Activated CD4-positive, alpha-beta T cell treated with anti-CD3 and anti-CD28 coated beads for 36 hours (primary cell): ENCODE measurements at regions of chr4 and their contacts with region 1.

Region 1: GRCh38 chr4:83284193-83285054 is at the start of gene COQ2:
- DNase-seq: peak; percentile 97
- ATAC-seq: peak; percentile 92
- H3K4me3 Mint-ChIP-seq: peak within 1 kb of the TSS; percentile 91
- H3K27ac Mint-ChIP-seq: peak within 1 kb of the TSS; percentile 96
- H3K4me1 Mint-ChIP-seq: peaks cover 29% of the 10 kb centered on the region
- H3K27me3 Mint-ChIP-seq: no peaks in the 10 kb centered on the region
- total RNA-seq, gene COQ2: 18.2 to 20.1 TPM

Region 2: GRCh38 chr4:82428969-82429727 is 855.3 kb before region 1 on chr4:
- CTCF ChIA-PET with region 1: no interaction called
- POLR2A ChIA-PET with region 1: no interaction called
- intact Hi-C with region 1: loop called in 1 of 2 experiments (anchors 5 kb)
- DNase-seq: peak; percentile 96
- ATAC-seq: peak; percentile 55
- H3K4me3 Mint-ChIP-seq: peak overlapping the region; percentile 94
- H3K27ac Mint-ChIP-seq: peak overlapping the region; percentile 99
- H3K4me1 Mint-ChIP-seq: peaks cover 50% of the 10 kb centered on the region
- H3K27me3 Mint-ChIP-seq: no peaks in the 10 kb centered on the region

Region 3: GRCh38 chr4:82890901-82891706 is 393.3 kb before region 1 on chr4 and contains the start of gene SEC31A:
- CTCF ChIA-PET with region 1: no interaction called
- POLR2A ChIA-PET with region 1: no interaction called
- intact Hi-C with region 1: loop called in 1 of 2 experiments (anchors 1 kb)
- DNase-seq: peak; percentile 99
- ATAC-seq: peak; percentile 94
- H3K4me3 Mint-ChIP-seq: peak within 1 kb of the TSS; percentile 81
- H3K27ac Mint-ChIP-seq: peak within 1 kb of the TSS; percentile 89
- H3K4me1 Mint-ChIP-seq: peaks cover 42% of the 10 kb centered on the region
- H3K27me3 Mint-ChIP-seq: no peaks in the 10 kb centered on the region
- total RNA-seq, gene SEC31A: 80.3 to 124 TPM

Region 4: DNA sequence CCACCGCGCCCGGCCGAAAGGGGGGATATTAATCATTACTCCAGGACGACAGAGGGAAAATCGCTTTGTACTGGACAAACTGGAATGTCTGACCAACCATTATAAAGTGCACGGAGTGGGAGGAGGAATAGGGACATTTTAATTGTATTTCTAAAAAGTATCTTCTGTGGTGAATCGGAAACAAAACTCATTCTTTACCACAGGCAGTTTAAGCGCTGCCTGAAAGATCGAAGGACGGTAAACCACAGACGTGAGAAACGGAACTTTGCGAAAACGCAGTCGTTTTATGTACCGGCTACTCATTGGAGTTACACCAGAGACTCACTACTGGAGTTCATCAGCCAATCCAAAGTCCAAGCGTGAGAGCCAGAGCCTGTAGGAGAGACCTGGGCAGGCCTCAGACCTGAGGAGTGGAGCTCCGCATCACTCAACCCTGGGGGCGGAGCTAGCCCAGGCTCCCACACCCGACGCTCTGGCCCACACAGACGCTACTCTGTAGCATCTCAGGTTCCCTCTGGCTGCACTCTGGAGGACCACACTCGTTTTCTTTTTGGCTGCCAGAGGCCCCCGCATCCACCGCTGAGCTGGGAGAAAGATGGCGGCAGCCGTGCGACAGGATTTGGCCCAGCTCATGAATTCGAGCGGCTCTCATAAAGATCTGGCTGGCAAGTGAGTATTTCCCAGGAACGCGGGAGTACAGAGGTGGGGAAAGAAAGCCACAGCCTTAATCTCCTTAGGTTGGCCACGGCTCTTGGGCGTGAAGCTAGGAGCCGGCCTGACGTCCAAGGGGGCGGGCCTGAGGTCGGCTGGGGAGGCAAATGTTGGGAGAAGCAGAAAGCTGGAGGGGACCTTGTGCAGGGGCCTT is 249.6 kb before region 1 on chr4 and contains the start of gene COPS4:
- CTCF ChIA-PET with region 1: interaction called, 9 read pairs
- POLR2A ChIA-PET with region 1: interaction called, 7 read pairs
- intact Hi-C with region 1: loop called (anchors 1 kb)
- DNase-seq: peak; percentile 97
- ATAC-seq: peak; percentile 97
- H3K4me3 Mint-ChIP-seq: peak within 1 kb of the TSS; percentile 91
- H3K27ac Mint-ChIP-seq: peak within 1 kb of the TSS; percentile 94
- H3K4me1 Mint-ChIP-seq: peaks cover 22% of the 10 kb centered on the region
- H3K27me3 Mint-ChIP-seq: no peaks in the 10 kb centered on the region
- total RNA-seq, gene COPS4: 35.7 to 35.9 TPM

Region 5: GRCh38 chr4:83110223-83110945 is 174.0 kb before region 1 on chr4:
- CTCF ChIA-PET with region 1: interaction called, 9 read pairs
- POLR2A ChIA-PET with region 1: interaction called, 3 read pairs
- intact Hi-C with region 1: loop called (anchors 1 to 2 kb)
- DNase-seq: peak; percentile 96
- ATAC-seq: peak; percentile 81
- H3K4me3 Mint-ChIP-seq: peak overlapping the region; percentile 91
- H3K27ac Mint-ChIP-seq: peak overlapping the region; percentile 96
- H3K4me1 Mint-ChIP-seq: peaks cover 49% of the 10 kb centered on the region
- H3K27me3 Mint-ChIP-seq: no peaks in the 10 kb centered on the region

Region 6: DNA sequence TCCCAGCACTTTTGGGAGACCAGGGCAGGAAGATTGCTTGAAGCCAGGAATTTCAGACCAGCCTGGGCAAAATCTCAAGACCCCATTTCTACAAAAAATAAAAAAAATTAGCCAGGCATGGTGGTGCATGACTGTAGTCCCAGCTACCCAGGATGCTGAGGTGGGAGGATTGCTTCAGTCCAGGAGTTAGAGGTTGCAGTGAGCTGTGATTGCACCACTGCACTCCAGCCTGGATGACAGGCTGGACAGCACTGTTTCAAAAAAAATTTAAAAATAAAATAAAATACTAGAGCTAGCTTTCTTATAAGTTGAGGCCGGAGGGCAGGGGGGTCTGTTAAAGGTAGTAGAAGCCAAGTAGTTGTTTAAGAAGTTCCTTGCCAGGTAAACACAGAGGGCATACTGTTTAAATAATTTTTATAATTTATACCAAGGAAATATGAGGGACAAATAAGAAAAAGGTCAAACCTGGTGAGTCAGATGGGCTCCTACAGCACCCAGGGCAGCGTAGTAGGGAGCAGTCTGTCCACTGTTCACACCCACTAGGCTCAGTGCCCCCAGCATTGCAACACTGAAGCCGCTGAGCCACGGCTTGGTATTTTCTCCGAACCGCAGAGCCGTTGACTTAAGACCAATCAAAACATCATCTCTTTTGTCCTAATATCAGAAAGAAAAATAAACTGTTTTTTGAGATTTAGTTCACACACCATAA is 17.1 kb before region 1 on chr4:
- CTCF ChIA-PET with region 1: interaction called, 31 read pairs
- POLR2A ChIA-PET with region 1: interaction called, 3 read pairs
- intact Hi-C with region 1: no loop called
- DNase-seq: no peak
- ATAC-seq: no peak
- H3K4me3 Mint-ChIP-seq: no peak overlapping the region
- H3K27ac Mint-ChIP-seq: no peak overlapping the region
- H3K4me1 Mint-ChIP-seq: peaks cover 10% of the 10 kb centered on the region
- H3K27me3 Mint-ChIP-seq: no peaks in the 10 kb centered on the region

Region 7: DNA sequence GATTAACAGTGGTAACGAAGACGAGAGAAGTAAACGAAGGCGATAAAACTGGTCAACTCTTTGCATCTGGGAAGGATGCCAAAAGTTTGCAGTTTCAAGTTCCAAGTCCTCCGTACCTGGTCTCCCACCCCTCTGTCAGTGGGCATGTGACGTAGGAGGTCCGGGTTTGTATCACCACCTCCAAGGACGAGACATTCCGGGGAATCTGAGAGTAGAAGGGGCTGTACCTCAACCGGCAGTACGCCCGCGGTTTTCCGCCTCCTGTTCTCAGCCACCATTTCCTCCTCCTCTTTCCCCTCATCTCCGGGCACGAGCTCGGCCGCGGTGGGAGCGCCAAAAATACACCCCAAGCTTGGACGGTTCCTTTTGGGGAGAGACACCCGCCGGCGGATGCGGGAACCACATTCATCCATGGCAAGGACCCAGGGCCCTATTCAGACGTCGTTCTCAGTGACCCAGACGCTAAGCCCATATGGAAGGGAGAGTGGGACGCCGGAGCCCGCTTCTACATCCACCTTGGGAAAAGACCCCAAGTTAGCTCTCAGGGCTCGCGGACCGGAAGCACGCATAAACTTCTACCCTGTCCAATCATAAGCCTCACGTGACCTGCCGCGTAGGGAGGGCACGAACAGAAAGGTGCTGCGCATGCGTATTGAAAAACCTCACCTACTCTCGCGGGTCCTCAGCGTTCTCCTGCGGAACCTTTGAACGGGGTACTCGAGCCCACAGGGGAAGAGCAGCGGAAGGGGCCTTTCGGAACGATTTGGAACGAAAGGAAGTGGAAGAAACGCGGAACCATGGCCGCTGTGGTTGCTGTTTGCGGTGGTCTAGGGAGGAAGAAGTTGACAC is 171.1 kb after region 1 on chr4 and contains the starts of genes HELQ and MRPS18C:
- CTCF ChIA-PET with region 1: interaction called, 4 read pairs
- POLR2A ChIA-PET with region 1: interaction called, 4 read pairs
- intact Hi-C with region 1: loop called (anchors 1 kb)
- DNase-seq: peak; percentile 97
- ATAC-seq: peak; percentile 92
- H3K4me3 Mint-ChIP-seq: peak within 1 kb of the TSS; percentile 97
- H3K27ac Mint-ChIP-seq: peak within 1 kb of the TSS; percentile 99
- H3K4me1 Mint-ChIP-seq: peaks cover 37% of the 10 kb centered on the region
- H3K27me3 Mint-ChIP-seq: no peaks in the 10 kb centered on the region
- total RNA-seq, gene HELQ: 9.3 to 10.1 TPM
- total RNA-seq, gene MRPS18C: 78.0 to 89.5 TPM